CD14-positive monocyte (primary cell): ENCODE measurements at regions of chr3 and their contacts with region 1.

Region 1: GRCh38 chr3:42247576-42248027 is 18.4 kb downstream of the CCK start:
- DNase-seq: peak in 2 of 3 donors; percentile 4 to 20
- H3K4me3 ChIP-seq: no peak overlapping the region
- H3K4me3 Mint-ChIP-seq: no peak overlapping the region
- H3K27ac ChIP-seq: no peak overlapping the region
- H3K27ac Mint-ChIP-seq: no peak overlapping the region
- H3K4me1 ChIP-seq: no peaks in the 10 kb centered on the region
- H3K4me1 Mint-ChIP-seq: peaks cover 3% of the 10 kb centered on the region
- H3K27me3 ChIP-seq: peaks cover 2 to 5% of the 10 kb centered on the region in 2 donors
- H3K27me3 Mint-ChIP-seq: peaks cover 7 to 16% (median 13%) of the 10 kb centered on the region in 3 donors
- CTCF ChIP-seq: peak; percentile 77

Region 2: DNA sequence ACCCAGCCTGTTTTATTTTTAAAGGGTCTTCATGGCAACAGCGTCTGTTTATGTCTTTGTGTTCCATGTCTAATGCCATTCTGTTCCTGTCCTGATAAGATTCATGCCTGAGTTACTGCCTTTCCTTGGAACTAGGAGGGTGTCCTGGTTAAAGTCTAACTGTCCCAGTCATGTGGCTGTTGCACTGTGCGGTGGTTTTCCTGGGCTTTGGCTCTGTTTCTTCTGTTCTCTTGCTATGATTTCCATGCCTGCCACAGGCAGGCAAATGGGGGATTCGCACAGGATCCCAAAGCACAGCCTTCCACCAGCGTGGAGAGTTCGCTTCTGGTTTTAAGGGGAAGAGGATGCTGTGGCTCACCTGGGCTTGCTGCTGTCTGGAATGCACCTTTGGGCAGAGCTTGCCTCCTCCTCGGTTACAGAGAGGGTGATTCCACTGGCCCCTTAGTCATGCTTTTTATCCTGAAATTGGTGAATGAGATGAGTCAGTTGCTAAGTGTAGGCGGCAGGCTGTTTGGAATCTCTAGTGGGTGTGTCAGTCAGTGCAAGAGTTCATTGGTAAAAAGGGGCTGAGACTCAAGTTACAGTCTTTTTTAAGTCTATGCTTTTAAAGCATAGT is 68.4 kb before region 1 on chr3:
- intact Hi-C with region 1: no loop called
- DNase-seq: no peak
- H3K4me3 ChIP-seq: no peak overlapping the region
- H3K4me3 Mint-ChIP-seq: no peak overlapping the region
- H3K27ac ChIP-seq: no peak overlapping the region
- H3K27ac Mint-ChIP-seq: no peak overlapping the region
- H3K4me1 ChIP-seq: no peaks in the 10 kb centered on the region
- H3K4me1 Mint-ChIP-seq: peaks cover 4% of the 10 kb centered on the region
- H3K27me3 ChIP-seq: no peaks in the 10 kb centered on the region
- H3K27me3 Mint-ChIP-seq: peaks cover 0 to 3% (median 0%) of the 10 kb centered on the region in 3 donors
- CTCF ChIP-seq: no peak

Region 3: DNA sequence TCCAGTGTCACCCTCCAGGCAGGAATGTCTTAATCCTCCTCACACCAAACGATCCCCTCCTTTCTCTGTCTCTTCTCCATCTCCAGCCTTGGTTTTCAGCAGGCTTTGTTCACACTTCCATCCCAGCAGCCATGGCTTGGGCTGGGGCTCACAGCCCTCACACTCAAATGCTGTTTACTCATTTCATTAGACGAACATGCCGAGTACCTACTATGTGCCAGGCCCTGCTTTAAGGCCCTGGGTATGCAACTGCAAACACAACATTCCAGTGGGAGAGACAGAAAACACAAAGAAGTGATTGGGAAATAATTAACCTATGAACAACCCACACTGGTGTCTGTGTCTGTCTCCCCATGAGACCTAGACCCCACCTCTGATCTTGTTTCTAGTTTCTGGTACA is 118.9 kb after region 1 on chr3:
- intact Hi-C with region 1: no loop called
- DNase-seq: no peak
- H3K4me3 ChIP-seq: no peak overlapping the region
- H3K4me3 Mint-ChIP-seq: no peak overlapping the region
- H3K27ac ChIP-seq: no peak overlapping the region
- H3K27ac Mint-ChIP-seq: no peak overlapping the region
- H3K4me1 ChIP-seq: peaks cover 3 to 5% of the 10 kb centered on the region in 2 donors
- H3K4me1 Mint-ChIP-seq: peaks cover 8% of the 10 kb centered on the region
- H3K27me3 ChIP-seq: no peaks in the 10 kb centered on the region
- H3K27me3 Mint-ChIP-seq: peaks cover 1 to 3% (median 1%) of the 10 kb centered on the region in 3 donors
- CTCF ChIP-seq: no peak

Region 4: GRCh38 chr3:42547401-42547945 is 299.9 kb after region 1 on chr3:
- intact Hi-C with region 1: loop called (anchors 10 kb)
- DNase-seq: peak; percentile 38 to 52 (median 52)
- H3K4me3 ChIP-seq: no peak overlapping the region
- H3K4me3 Mint-ChIP-seq: no peak overlapping the region
- H3K27ac ChIP-seq: no peak overlapping the region
- H3K27ac Mint-ChIP-seq: no peak overlapping the region
- H3K4me1 ChIP-seq: peaks cover 5 to 9% of the 10 kb centered on the region in 2 donors
- H3K4me1 Mint-ChIP-seq: peaks cover 5% of the 10 kb centered on the region
- H3K27me3 ChIP-seq: no peaks in the 10 kb centered on the region
- H3K27me3 Mint-ChIP-seq: no peaks in the 10 kb centered on the region
- CTCF ChIP-seq: peak; percentile 97